ENCODE measurements at regions of chr20 and their contacts with region 1.

Region 1: GRCh38 chr20:9359561-9360308 is 154.7 kb upstream of the LAMP5 start:
- DNase-seq: peak in 1 of 2 donors; percentile 26
- ATAC-seq: peak; percentile 68 to 93 (median 80)
- H3K4me3 ChIP-seq: peak overlapping the region; percentile 49
- H3K27ac ChIP-seq: no peak overlapping the region
- H3K4me1 ChIP-seq: peaks cover 3% of the 10 kb centered on the region
- H3K27me3 ChIP-seq: no peaks in the 10 kb centered on the region
- CTCF ChIP-seq: peak; percentile 77

Region 2: DNA sequence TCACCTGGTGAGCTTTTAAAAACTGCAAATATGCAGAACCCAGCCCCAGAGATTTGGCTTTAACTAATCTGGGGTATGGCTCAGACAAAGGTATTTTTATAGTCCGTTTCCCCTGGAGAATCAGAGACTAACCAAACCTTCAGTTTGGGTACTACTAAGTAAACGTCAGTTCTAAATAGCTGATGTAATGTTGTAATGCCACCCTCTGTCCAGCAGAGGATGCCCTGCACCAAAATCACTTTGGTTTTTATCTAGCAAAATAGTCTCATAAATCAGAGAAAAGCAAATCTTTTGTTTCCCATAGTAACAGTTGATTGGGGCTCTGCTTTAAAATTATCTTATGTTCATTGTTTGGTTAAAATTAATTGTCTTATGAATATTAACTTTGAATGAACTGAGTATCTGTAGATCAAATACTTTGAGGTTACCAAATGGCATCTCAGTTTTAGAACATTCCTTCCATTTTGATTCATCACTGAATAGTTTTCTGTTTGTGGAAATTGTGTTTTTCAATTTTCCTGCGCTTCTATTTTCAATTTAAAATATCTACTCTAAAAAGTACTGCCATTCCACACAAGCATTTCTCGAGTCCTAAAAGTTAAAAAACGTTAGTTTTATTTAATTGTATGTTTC is 569.2 kb before region 1 on chr20:
- intact Hi-C with region 1: loop called (anchors 2 to 5 kb)
- DNase-seq: no peak
- ATAC-seq: no peak
- H3K4me3 ChIP-seq: no peak overlapping the region
- H3K27ac ChIP-seq: no peak overlapping the region
- H3K4me1 ChIP-seq: no peaks in the 10 kb centered on the region
- H3K27me3 ChIP-seq: no peaks in the 10 kb centered on the region
- CTCF ChIP-seq: peak; percentile 92

Region 3: DNA sequence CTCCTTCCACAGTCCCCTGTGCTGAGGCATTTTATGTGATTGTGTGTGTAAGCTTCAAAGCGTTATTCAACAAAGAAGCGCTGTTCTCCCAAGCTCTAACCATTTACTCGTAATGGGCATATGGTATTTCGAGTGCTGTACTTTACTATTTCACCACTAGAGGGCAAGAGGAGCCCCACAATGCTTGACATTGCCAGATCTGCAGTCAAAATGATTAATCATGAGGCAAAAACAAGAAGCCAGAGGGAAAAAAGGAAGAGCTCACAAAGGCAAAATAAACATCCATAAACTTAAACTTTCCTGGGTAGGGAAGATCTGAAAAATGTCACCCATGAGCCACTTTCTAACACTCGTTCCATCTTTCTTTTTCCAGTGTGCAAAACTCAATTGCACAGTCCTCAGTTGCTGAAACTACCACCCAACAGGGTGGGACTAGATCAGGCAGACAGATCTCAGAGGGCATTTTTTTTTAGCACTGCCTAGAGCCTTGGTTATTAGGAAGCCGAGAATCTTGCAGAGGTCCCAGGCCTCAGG is 505.9 kb before region 1 on chr20:
- intact Hi-C with region 1: loop called (anchors 2 kb)
- DNase-seq: no peak
- ATAC-seq: peak; percentile 77 to 96 (median 86)
- H3K4me3 ChIP-seq: peak overlapping the region; percentile 45
- H3K27ac ChIP-seq: peak overlapping the region; percentile 50
- H3K4me1 ChIP-seq: peaks cover 8% of the 10 kb centered on the region
- H3K27me3 ChIP-seq: no peaks in the 10 kb centered on the region
- CTCF ChIP-seq: peak; percentile 94

Region 4: GRCh38 chr20:9130521-9130920 is 229.2 kb before region 1 on chr20:
- intact Hi-C with region 1: no loop called
- DNase-seq: no peak
- ATAC-seq: no peak
- H3K4me3 ChIP-seq: no peak overlapping the region
- H3K27ac ChIP-seq: no peak overlapping the region
- H3K4me1 ChIP-seq: no peaks in the 10 kb centered on the region
- H3K27me3 ChIP-seq: no peaks in the 10 kb centered on the region
- CTCF ChIP-seq: no peak

Region 5: DNA sequence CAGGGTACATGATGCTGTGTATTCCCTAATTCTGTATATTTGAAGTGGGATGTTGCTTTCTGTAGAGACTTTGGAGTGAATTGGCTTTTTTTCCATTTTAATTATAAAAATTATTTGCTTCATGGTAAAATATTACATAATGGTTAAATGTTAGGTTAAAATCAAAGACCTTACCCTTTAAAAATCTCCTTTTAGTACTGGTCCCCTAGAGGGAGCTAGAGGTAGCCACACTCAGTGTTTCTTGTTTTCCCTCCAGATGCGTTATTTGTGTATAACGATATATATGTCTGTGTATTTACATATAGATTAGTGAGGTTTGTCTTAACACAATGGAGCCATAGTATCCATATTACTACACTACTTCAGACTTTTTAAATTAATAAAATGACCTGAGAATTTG is 144.2 kb before region 1 on chr20:
- intact Hi-C with region 1: loop called (anchors 5 to 10 kb)
- DNase-seq: no peak
- ATAC-seq: no peak
- H3K4me3 ChIP-seq: no peak overlapping the region
- H3K27ac ChIP-seq: no peak overlapping the region
- H3K4me1 ChIP-seq: peaks cover 17% of the 10 kb centered on the region
- H3K27me3 ChIP-seq: no peaks in the 10 kb centered on the region
- CTCF ChIP-seq: peak; percentile 29

Region 6: GRCh38 chr20:9220874-9221547 is 138.7 kb before region 1 on chr20:
- intact Hi-C with region 1: loop called (anchors 5 to 10 kb)
- DNase-seq: no peak
- ATAC-seq: no peak
- H3K4me3 ChIP-seq: no peak overlapping the region
- H3K27ac ChIP-seq: no peak overlapping the region
- H3K4me1 ChIP-seq: peaks cover 30% of the 10 kb centered on the region
- H3K27me3 ChIP-seq: no peaks in the 10 kb centered on the region
- CTCF ChIP-seq: no peak

Measured in psoas muscle (tissue), 8 donors.